Activated CD4-positive, alpha-beta T cell treated with anti-CD3 and anti-CD28 coated beads for 36 hours (primary cell): ENCODE measurements at regions of chr4 and their contacts with region 1.

Region 1: GRCh38 chr4:1346781-1347409 is at the start of gene UVSSA:
- DNase-seq: peak; percentile 100
- ATAC-seq: peak; percentile 95
- H3K4me3 Mint-ChIP-seq: peak within 1 kb of the TSS; percentile 86
- H3K27ac Mint-ChIP-seq: peak within 1 kb of the TSS; percentile 87
- H3K4me1 Mint-ChIP-seq: peaks cover 47% of the 10 kb centered on the region
- H3K27me3 Mint-ChIP-seq: no peaks in the 10 kb centered on the region
- total RNA-seq, gene UVSSA: 14.8 to 18.1 TPM

Region 2: GRCh38 chr4:498328-498904 is 848.5 kb before region 1 on chr4:
- CTCF ChIA-PET with region 1: no interaction called
- POLR2A ChIA-PET with region 1: no interaction called
- intact Hi-C with region 1: no loop called
- DNase-seq: no peak
- ATAC-seq: peak; percentile 23
- H3K4me3 Mint-ChIP-seq: peak overlapping the region; percentile 94
- H3K27ac Mint-ChIP-seq: peak overlapping the region; percentile 97
- H3K4me1 Mint-ChIP-seq: peaks cover 33% of the 10 kb centered on the region
- H3K27me3 Mint-ChIP-seq: no peaks in the 10 kb centered on the region

Region 3: DNA sequence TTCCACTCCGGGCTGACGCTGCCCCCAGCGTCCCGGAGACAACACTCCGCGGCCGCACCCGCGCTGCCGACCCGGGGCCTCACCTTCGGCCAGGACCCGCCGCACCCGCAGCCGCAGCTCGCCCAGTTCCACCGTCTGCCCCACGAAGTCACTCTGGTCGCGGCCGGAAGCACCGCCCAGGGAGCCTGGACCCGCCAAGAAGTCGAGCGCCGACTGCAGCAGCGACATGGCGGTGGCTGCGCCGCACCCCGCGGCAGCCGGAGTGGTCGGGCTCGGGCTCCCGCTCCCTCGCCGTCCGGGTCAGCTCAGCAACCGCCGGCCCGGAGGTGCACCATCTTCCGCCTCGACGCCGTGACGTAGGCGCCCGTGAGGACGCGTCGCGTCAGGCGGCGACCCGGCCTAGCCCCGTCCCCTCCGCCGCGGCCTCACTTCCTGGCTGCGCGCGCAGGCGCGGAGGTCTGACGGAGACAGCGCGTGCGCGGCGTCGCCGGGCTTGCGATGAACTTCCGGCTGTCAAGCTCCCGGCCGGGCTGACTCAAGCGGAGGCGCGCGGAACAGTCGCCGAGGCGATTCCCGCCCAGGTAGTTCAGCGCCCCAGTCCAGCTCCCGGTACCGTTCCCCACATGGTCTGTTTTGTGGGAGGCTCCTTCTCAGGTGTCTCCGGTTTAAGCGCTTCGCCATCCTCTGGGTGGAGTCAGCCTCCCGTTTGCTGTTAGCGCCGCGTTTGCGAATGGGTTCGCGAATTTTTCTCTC is 414.8 kb before region 1 on chr4 and contains the starts of genes GAK and TMEM175:
- CTCF ChIA-PET with region 1: no interaction called
- POLR2A ChIA-PET with region 1: no interaction called
- intact Hi-C with region 1: loop called in 1 of 2 experiments (anchors 1 kb)
- DNase-seq: peak; percentile 98
- ATAC-seq: peak; percentile 95
- H3K4me3 Mint-ChIP-seq: peak within 1 kb of the TSS; percentile 87
- H3K27ac Mint-ChIP-seq: peak within 1 kb of the TSS; percentile 89
- H3K4me1 Mint-ChIP-seq: peaks cover 29% of the 10 kb centered on the region
- H3K27me3 Mint-ChIP-seq: no peaks in the 10 kb centered on the region
- total RNA-seq, gene GAK: 82.9 to 88.0 TPM
- total RNA-seq, gene TMEM175: 15.2 to 17.3 TPM

Region 4: DNA sequence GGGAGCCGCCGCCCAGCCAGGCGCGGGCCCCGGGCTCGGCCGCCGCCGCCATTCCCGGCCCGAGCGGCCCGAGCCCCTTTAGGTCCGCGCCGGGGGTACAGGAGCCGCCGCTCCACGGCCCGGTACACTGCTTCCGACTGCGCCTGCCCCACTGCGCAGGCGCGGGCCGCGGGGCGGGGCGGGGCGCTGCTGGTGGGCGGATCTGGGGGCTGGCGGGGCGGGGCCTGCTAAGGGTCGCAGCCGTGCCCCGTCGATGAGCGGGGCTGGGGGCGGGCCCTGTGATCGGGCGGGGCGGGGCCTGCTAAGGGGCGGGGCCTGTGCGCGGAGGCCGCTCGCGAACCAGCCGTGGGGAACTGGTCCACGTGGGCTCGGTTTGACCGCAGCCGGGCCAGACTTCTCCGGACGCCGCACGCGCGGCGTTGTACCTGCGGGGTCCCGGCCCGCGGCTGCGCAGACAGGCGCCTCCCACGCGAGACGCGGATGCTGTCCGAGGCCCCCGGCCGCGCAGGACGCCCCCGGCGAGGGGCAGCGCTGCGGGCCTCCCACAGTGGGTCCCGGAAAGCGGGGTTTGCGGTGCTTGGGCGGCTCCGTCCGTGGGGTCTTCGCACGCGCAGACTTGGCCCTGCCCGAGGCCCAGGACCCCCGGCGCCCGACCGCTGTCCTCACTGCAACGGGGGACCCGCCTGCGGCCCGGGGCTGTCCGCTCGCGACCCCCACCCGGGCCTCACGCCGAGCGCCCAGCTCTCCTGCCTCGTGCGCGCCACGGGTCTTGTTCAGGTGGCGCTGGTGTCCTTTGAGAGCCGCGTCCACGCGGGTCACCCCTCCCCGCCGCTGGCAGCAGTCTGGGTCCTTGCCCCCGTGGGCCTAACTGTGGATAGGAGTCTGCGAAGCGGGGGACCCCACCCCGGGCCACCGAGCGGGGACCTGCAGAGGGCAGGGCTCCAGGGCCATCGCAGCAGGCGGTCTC is 373.2 kb before region 1 on chr4 and contains the start of gene DGKQ:
- CTCF ChIA-PET with region 1: no interaction called
- POLR2A ChIA-PET with region 1: no interaction called
- intact Hi-C with region 1: loop called in 1 of 2 experiments (anchors 1 kb)
- DNase-seq: peak; percentile 93
- ATAC-seq: peak; percentile 96
- H3K4me3 Mint-ChIP-seq: peak within 1 kb of the TSS; percentile 58
- H3K27ac Mint-ChIP-seq: no peak within 1 kb of the TSS
- H3K4me1 Mint-ChIP-seq: peaks cover 6% of the 10 kb centered on the region
- H3K27me3 Mint-ChIP-seq: no peaks in the 10 kb centered on the region
- total RNA-seq, gene DGKQ: 9.3 to 11.3 TPM

Region 5: GRCh38 chr4:1200425-1201035 is 146.4 kb before region 1 on chr4:
- CTCF ChIA-PET with region 1: interaction called, 3 read pairs
- POLR2A ChIA-PET with region 1: no interaction called
- intact Hi-C with region 1: loop called (anchors 1 to 5 kb)
- DNase-seq: peak; percentile 51
- ATAC-seq: no peak
- H3K4me3 Mint-ChIP-seq: peak overlapping the region; percentile 74
- H3K27ac Mint-ChIP-seq: peak overlapping the region; percentile 73
- H3K4me1 Mint-ChIP-seq: peaks cover 40% of the 10 kb centered on the region
- H3K27me3 Mint-ChIP-seq: no peaks in the 10 kb centered on the region

Region 6: DNA sequence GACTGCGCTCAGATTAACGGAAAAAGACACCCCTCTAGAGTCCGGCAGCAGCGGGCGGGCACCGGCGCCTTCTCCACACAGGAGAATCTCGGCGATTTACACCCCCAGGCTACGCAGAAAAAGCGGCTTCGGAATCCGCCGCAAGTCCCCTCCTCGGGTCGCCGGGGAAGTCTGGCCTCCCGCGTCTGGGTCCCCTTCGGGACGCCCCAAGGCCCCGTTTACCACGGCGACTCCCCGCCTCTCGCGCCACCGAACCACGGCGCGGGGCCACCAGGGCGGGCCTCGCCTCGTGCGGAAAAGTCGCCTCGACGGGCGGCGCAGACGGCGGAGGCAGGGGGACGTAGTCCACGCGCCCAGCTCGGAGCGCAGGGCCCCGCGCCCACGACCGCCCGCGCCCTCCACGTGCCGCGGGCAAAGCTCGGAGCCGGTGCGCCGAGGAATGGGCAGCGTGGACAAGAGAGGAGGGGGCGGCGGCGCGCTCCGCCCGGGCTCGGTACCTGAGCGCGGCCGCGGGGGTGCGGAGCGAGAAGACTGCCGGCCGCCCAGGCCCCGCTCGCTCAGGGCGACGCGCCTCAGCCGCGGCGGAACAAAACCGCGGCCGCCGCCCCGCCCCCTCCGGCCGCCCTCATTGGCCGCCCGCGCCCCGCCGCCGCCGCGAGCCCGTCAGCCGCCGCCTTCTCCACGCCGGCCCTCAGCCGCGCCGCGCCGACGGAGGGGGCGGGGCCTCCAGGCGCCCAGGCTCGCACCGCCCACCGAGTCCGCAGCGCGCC is 337.0 kb after region 1 on chr4 and contains the start of gene FAM53A:
- CTCF ChIA-PET with region 1: no interaction called
- POLR2A ChIA-PET with region 1: no interaction called
- intact Hi-C with region 1: loop called in 1 of 2 experiments (anchors 1 kb)
- DNase-seq: no peak
- ATAC-seq: peak; percentile 96
- H3K4me3 Mint-ChIP-seq: peak within 1 kb of the TSS; percentile 69
- H3K27ac Mint-ChIP-seq: peak within 1 kb of the TSS; percentile 69
- H3K4me1 Mint-ChIP-seq: peaks cover 12% of the 10 kb centered on the region
- H3K27me3 Mint-ChIP-seq: no peaks in the 10 kb centered on the region
- total RNA-seq, gene FAM53A: 2.0 to 2.5 TPM